ENCODE measurements at regions of chrX and their contacts with region 1.

Region 1: GRCh38 chrX:17535229-17535628 is 160.2 kb downstream of the NHS start:
- DNase-seq: no peak
- ATAC-seq: no peak
- H3K4me3 ChIP-seq: no peak overlapping the region
- H3K27ac ChIP-seq: no peak overlapping the region
- H3K4me1 ChIP-seq: no peaks in the 10 kb centered on the region
- H3K27me3 ChIP-seq: no peaks in the 10 kb centered on the region

Region 2: DNA sequence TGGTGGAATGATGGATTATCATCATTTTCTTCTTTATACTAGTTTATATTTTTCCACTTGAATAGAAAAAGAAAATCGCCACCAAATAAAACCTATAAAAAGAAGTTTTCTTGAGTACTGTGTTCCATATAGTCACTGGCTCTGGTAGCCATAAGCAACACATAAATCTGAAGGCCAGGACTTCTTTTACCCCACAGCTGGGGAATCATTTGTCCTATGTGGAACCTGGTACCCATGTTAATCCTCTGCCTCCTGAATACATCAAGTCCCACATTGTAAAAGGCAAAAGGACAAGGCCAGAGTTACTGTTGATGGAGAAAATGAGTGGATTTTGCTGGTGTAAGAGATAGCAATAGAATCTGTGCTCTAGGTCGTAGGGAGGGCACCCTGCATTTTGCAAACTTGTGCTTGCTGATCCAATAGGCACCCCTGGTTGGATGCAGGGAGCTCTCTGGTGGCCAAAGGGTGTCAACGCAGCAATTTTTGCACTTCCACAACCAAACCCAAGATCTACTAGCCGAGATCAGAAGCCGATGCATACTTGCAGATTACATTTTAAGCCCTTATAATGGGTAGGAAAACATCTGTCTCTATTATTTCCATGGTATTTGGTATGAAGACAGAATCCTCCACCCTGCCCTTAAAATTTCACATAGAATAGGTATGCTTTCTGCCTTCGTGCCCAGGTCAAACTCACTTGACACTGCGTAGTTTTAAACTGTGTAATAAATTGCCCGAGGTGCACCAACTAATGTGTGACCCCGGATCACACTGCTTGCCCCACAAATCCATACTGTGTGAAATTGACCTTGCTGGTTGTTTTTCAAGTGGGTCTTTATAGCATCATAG is 55.9 kb after region 1 on chrX:
- intact Hi-C with region 1: loop called in 1 of 4 experiments (anchors 10 kb)
- DNase-seq: peak; percentile 44 to 75 (median 70)
- ATAC-seq: peak; percentile 88 to 90
- H3K4me3 ChIP-seq: no peak overlapping the region
- H3K27ac ChIP-seq: no peak overlapping the region
- H3K4me1 ChIP-seq: peaks cover 3% of the 10 kb centered on the region
- H3K27me3 ChIP-seq: no peaks in the 10 kb centered on the region

Region 3: GRCh38 chrX:17689971-17690409 is 154.8 kb after region 1 on chrX:
- intact Hi-C with region 1: loop called in 3 of 4 experiments (anchors 5 to 10 kb)
- DNase-seq: no peak
- ATAC-seq: peak; percentile 59 to 84
- H3K4me3 ChIP-seq: no peak overlapping the region
- H3K27ac ChIP-seq: no peak overlapping the region
- H3K4me1 ChIP-seq: no peaks in the 10 kb centered on the region
- H3K27me3 ChIP-seq: no peaks in the 10 kb centered on the region